ENCODE measurements at regions of chr10 and their contacts with region 1.

Region 1: GRCh38 chr10:69716711-69717560 is 84.8 kb upstream of the COL13A1 start:
- DNase-seq: peak in 1 of 2 experiments; percentile 66
- H3K4me3 ChIP-seq: no peak overlapping the region
- H3K27ac ChIP-seq: no peak overlapping the region
- H3K4me1 ChIP-seq: no peaks in the 10 kb centered on the region
- H3K27me3 ChIP-seq: peaks cover 63% of the 10 kb centered on the region
- CTCF ChIP-seq: peak; percentile 93

Region 2: GRCh38 chr10:69515699-69516259 is 201.2 kb before region 1 on chr10:
- CTCF ChIA-PET with region 1: no interaction called
- POLR2A ChIA-PET with region 1: no interaction called
- intact Hi-C with region 1: loop called (anchors 1 kb)
- DNase-seq: peak; percentile 57 to 74
- H3K4me3 ChIP-seq: no peak overlapping the region
- H3K27ac ChIP-seq: no peak overlapping the region
- H3K4me1 ChIP-seq: no peaks in the 10 kb centered on the region
- H3K27me3 ChIP-seq: no peaks in the 10 kb centered on the region
- CTCF ChIP-seq: peak; percentile 95

Region 3: DNA sequence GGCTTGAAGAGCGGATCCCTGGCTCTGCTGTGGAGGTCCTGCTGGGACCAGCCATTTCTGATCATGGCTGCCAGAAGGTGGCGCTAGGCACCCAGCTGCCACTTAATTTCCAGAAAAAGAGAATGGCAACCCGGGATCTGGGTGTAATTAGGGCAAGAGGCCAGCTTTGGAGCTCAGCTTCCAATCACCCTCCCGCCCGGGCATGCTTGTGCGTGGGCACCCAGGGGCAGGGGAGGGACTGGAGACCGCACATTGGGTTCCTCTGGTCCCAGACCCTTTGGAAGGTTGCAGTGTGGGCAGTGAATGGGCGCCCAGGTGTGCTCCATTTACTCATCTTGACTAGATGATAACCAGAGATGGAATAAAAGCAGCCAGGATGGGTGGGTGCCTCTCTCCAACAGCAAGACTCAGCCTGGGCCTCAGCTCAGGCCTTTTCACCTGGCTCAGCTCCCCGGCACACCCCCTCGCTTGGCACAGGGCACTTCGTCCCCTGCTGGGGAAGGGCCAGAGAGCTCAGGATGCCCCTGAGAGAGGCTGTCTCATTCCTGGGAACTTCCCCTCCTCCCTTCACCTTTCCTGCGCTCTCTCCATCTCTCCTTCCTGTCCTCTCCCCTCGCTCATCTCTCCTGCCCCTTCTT is 72.2 kb before region 1 on chr10:
- CTCF ChIA-PET with region 1: interaction called, 4 read pairs
- POLR2A ChIA-PET with region 1: no interaction called
- intact Hi-C with region 1: loop called (anchors 1 kb)
- DNase-seq: peak; percentile 46 to 68
- H3K4me3 ChIP-seq: no peak overlapping the region
- H3K27ac ChIP-seq: no peak overlapping the region
- H3K4me1 ChIP-seq: peaks cover 10% of the 10 kb centered on the region
- H3K27me3 ChIP-seq: peaks cover 35% of the 10 kb centered on the region
- CTCF ChIP-seq: peak; percentile 95

Region 4: GRCh38 chr10:69684020-69684980 is 32.6 kb before region 1 on chr10:
- CTCF ChIA-PET with region 1: no interaction called
- POLR2A ChIA-PET with region 1: no interaction called
- intact Hi-C with region 1: no loop called
- DNase-seq: peak in 1 of 2 experiments; percentile 38
- H3K4me3 ChIP-seq: no peak overlapping the region
- H3K27ac ChIP-seq: no peak overlapping the region
- H3K4me1 ChIP-seq: no peaks in the 10 kb centered on the region
- H3K27me3 ChIP-seq: peaks cover 95% of the 10 kb centered on the region
- CTCF ChIP-seq: no peak

Region 5: DNA sequence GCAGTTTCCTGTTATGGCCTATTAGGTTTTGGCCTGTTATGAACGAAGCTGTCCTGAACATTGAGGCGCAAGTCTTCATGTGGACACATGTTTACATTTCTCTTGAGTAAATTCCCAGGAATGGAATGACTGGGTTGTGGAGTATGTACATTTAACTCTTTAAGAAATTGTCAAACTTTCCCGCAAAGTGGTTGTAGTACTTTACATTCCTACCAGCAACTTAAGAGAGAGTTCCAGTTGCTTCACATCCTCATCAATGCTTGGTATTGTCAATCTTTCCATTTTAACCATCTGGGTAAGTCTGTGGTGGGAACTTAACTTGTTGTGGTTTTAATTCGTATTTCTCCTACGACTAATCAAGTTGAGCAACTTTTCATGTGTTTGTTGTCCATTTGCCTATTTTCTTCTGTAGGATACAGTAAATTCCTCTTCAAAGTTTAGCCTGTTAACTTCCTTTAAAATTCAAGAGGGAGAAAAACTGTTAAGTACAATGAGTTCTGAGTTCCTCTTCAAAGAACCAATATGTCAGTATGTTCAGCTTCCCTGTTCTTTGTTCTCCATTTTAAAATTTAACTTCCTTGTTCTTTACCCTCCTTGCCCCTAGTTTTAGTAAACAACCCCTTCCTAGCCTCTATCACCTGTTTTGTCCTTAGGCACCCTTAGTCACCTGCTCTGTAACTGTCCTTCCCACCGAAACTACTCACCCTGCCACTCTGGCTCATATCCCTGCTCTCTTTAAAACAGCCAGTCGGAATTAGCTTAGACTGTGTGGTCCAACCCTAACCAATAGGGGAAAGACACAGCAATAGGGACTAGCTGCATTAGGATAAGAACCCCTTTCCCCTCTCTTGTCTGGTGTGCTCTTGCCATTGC is 12.9 kb before region 1 on chr10:
- CTCF ChIA-PET with region 1: no interaction called
- POLR2A ChIA-PET with region 1: no interaction called
- intact Hi-C with region 1: no loop called
- DNase-seq: peak in 1 of 2 experiments; percentile 70
- H3K4me3 ChIP-seq: no peak overlapping the region
- H3K27ac ChIP-seq: no peak overlapping the region
- H3K4me1 ChIP-seq: no peaks in the 10 kb centered on the region
- H3K27me3 ChIP-seq: peaks cover 86% of the 10 kb centered on the region
- CTCF ChIP-seq: no peak

Region 6: GRCh38 chr10:69800109-69800508 is 83.2 kb after region 1 on chr10:
- CTCF ChIA-PET with region 1: no interaction called
- POLR2A ChIA-PET with region 1: no interaction called
- intact Hi-C with region 1: loop called (anchors 1 kb)
- DNase-seq: peak; percentile 48 to 49
- H3K4me3 ChIP-seq: no peak overlapping the region
- H3K27ac ChIP-seq: no peak overlapping the region
- H3K4me1 ChIP-seq: peaks cover 32% of the 10 kb centered on the region; the same call in 1 of the 2 replicates
- H3K27me3 ChIP-seq: no peaks in the 10 kb centered on the region
- CTCF ChIP-seq: peak; percentile 82

Region 7: DNA sequence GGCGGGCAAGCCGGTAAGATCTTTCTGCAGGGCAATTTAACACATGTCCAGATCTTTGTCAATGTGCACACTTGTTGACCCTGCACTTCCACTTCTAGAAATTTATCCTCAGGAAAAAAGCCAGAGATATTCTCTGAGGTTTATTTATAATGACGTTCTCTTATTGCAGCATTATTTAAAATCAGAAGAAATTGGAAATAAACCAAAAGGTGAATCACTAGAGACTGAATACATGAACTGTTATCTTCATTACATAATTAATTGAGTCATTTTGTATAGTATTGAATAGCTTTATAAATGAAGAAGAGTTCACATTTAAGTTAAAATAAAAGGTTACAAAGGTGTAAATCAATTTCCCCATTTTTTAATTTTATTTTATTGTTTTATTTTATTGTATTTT is 469.6 kb after region 1 on chr10:
- CTCF ChIA-PET with region 1: no interaction called
- POLR2A ChIA-PET with region 1: no interaction called
- intact Hi-C with region 1: no loop called
- DNase-seq: no peak
- H3K4me3 ChIP-seq: no peak overlapping the region
- H3K27ac ChIP-seq: no peak overlapping the region
- H3K4me1 ChIP-seq: peaks cover 26% of the 10 kb centered on the region
- H3K27me3 ChIP-seq: no peaks in the 10 kb centered on the region
- CTCF ChIP-seq: no peak

Measured in PC-9 (cell line).